Dendritic cell treated with granulocyte-macrophage colony-stimulating factor and Interleukin-4, amounts not matched to agents 40 ng/mL and 50 ng/mL, for 4 days (primary cell): ENCODE measurements at regions of chr14 and their contacts with region 1.

Region 1: DNA sequence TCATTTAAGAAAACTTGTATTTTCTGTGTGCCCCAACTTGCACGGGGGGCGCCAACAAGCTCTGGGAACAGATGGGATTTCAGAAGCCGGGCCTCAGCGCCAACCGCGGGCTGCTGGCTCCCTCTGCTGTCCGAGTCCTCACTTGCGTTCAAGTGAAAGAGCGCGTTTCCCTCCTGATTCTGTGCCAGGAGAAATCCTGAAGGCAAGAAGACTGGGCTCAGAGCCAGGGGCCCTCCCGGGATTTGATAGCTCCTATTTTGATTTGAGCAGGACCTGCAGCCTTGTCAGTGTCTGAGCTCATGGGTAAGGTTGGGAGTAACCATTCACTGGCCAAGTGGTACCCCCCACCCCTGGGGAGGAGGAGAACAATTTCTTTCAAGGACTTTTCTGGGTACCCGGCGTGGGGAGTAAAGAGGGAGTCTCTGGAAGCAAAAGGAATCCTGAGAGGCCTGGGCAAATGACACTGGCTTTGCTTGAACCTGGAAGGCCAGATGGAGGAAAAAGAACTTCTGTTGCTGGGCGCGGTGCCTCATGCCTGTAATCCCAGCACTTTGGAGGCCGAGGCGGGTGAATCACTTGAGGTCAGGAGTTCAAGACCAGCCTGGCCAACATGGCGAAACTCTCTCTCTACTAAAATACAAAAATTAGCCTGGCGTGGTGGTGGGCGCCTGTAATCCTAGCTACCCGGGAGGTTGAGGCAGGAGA is 179.0 kb upstream of the RGS6 start:
- H3K4me3 Mint-ChIP-seq: peak overlapping the region; percentile 34
- H3K27ac Mint-ChIP-seq: no peak overlapping the region
- H3K4me1 Mint-ChIP-seq: peaks cover 15% of the 10 kb centered on the region
- H3K27me3 Mint-ChIP-seq: peaks cover 1% of the 10 kb centered on the region

Region 2: DNA sequence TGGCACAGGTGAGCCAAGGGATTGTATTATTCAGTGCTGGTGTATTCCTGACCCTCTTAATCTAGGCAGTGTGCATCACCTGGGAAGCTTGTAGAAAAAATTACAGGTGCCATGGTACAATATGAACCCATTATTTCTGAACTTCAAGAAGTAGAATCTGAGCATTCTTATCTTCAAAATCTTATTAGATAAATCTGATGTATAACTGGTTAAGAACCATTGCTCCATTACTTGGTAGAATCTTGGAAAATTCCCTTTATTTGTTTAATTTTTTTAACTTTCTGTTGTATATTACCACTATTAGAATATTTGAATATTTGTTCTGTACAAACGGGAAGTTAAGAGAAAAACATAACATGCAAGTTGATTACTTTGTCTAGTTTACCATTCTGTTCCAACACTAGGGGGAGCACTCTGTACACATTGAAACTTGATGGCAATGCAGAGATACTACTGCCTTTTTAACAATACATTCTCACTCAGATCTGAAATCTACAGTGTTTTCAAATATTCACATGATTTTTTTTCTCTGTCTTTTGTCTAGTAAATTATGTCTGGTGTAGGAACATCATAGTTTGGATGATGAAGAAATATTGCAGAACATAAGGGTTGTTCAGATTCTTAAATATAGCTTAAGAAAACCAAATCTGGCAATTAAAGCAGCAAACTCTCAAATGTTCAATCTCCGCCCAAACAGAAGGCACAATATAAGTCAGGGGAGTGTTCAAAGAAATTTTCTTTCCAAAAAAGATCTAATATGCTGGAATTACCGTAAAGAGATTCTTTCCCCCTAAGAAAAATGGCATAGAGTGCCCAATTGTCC is 649.4 kb before region 1 on chr14:
- intact Hi-C with region 1: loop called (anchors 1 kb)
- H3K4me3 Mint-ChIP-seq: no peak overlapping the region
- H3K27ac Mint-ChIP-seq: no peak overlapping the region
- H3K4me1 Mint-ChIP-seq: no peaks in the 10 kb centered on the region
- H3K27me3 Mint-ChIP-seq: no peaks in the 10 kb centered on the region

Region 3: GRCh38 chr14:71138448-71139293 is 614.6 kb before region 1 on chr14:
- intact Hi-C with region 1: loop called (anchors 1 kb)
- H3K4me3 Mint-ChIP-seq: no peak overlapping the region
- H3K27ac Mint-ChIP-seq: peak overlapping the region; percentile 0
- H3K4me1 Mint-ChIP-seq: peaks cover 35% of the 10 kb centered on the region
- H3K27me3 Mint-ChIP-seq: no peaks in the 10 kb centered on the region